ENCODE measurements at regions of chr5 and their contacts with region 1.

Region 1: DNA sequence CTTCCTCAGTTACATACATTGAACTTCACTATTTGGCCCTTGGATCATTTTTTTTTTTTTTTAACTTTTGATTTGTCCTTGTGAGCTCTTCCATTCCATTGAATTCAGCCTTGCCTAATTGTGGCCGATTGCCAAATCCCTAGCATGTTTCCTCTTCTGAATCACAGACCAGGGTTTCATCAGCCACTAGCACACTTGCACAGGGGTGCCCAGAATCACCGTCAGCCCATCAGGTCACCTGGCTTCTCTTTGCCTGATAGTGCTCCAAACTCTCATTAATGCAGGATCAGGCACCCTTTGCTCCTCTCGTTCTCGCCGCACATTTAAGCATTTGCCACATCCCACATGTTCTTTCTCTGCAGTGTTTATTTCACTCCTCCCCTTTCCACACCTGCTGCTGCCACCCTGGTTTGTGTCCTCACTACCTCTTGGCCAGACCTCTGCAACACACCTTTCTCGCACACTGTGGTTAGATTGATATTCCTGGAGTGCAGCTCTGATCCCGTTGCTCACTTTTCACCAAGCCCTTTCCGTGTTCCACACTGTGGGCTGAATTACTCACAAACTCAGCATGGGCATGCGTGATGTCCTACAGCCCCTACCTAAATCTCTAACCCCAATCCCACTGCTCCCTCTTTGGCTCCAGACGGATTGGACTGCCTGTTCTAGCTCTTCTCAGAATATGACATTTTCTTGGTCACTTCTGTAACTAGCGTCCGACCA is 9.8 kb downstream of the PIK3R1 start:
- DNase-seq: peak; percentile 98
- H3K4me3 Mint-ChIP-seq: peak overlapping the region; percentile 69
- H3K27ac Mint-ChIP-seq: peak overlapping the region; percentile 92
- H3K4me1 Mint-ChIP-seq: peaks cover 85% of the 10 kb centered on the region
- H3K27me3 Mint-ChIP-seq: no peaks in the 10 kb centered on the region
- CTCF ChIP-seq: no peak

Region 2: GRCh38 chr5:68196876-68197275 is 28.5 kb before region 1 on chr5:
- CTCF ChIA-PET with region 1: no interaction called
- POLR2A ChIA-PET with region 1: no interaction called
- intact Hi-C with region 1: no loop called
- DNase-seq: no peak
- H3K4me3 Mint-ChIP-seq: no peak overlapping the region
- H3K27ac Mint-ChIP-seq: no peak overlapping the region
- H3K4me1 Mint-ChIP-seq: peaks cover 5% of the 10 kb centered on the region
- H3K27me3 Mint-ChIP-seq: no peaks in the 10 kb centered on the region
- CTCF ChIP-seq: no peak

Region 3: DNA sequence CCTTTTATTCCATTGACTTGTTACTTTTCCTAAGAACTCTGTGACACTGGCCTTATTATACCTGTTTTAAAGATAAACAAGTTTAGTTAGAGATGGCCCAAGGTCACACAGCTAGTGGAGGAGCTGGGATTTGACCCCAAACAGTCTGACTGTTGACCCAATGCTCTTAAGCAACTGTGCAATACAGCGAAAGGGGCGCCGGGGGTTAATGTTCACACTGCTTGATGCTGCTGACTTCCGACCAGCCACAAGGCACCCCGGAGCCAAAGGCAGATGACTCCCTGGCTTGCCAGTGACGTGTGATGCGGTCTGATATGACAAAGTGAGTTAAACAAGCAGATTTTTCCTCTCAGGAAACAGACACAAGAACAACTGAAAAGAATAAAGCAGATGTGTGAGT is 14.1 kb after region 1 on chr5:
- CTCF ChIA-PET with region 1: interaction called, 3 read pairs
- POLR2A ChIA-PET with region 1: interaction called, 112 read pairs
- intact Hi-C with region 1: no loop called
- DNase-seq: peak; percentile 65
- H3K4me3 Mint-ChIP-seq: peak overlapping the region; percentile 60
- H3K27ac Mint-ChIP-seq: peak overlapping the region; percentile 89
- H3K4me1 Mint-ChIP-seq: peaks cover 53% of the 10 kb centered on the region
- H3K27me3 Mint-ChIP-seq: no peaks in the 10 kb centered on the region
- CTCF ChIP-seq: no peak

Region 4: GRCh38 chr5:68333649-68334552 is 108.6 kb after region 1 on chr5:
- CTCF ChIA-PET with region 1: no interaction called
- POLR2A ChIA-PET with region 1: no interaction called
- intact Hi-C with region 1: no loop called
- DNase-seq: peak; percentile 93
- H3K4me3 Mint-ChIP-seq: no peak overlapping the region
- H3K27ac Mint-ChIP-seq: no peak overlapping the region
- H3K4me1 Mint-ChIP-seq: peaks cover 32% of the 10 kb centered on the region
- H3K27me3 Mint-ChIP-seq: no peaks in the 10 kb centered on the region
- CTCF ChIP-seq: peak; percentile 37

Region 5: DNA sequence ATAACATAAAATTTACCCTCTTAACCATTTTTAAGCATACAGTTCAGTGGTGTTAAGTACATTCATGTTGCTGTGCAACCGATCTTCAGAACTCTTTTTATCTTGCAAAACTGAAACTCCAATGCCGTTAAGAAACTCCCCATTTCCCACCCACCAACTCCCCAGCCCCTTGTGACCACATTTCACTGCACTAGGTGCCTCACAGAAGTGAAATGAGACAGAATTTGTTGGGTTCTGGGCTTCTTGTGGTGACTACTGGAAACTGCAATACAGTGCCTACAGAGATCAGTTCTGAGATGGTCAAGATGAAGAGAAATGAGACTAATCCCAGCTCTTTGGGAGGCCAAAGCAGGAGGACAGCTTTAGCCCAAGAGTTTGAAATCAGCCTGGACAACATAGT is 666.4 kb after region 1 on chr5:
- CTCF ChIA-PET with region 1: no interaction called
- POLR2A ChIA-PET with region 1: no interaction called
- intact Hi-C with region 1: no loop called
- DNase-seq: no peak
- H3K4me3 Mint-ChIP-seq: no peak overlapping the region
- H3K27ac Mint-ChIP-seq: no peak overlapping the region
- H3K4me1 Mint-ChIP-seq: peaks cover 9% of the 10 kb centered on the region
- H3K27me3 Mint-ChIP-seq: peaks cover 4% of the 10 kb centered on the region
- CTCF ChIP-seq: no peak

Measured in MCF 10A (cell line).